Activated T-helper 2 cell treated with anti-CD3 and anti-CD28 coated beads, Interferon-gamma antibody, Interleukin-2, Interleukin-4, amounts not matched to agents 10 μg/mL and 5 μg/mL and 100 μg/mL, durations not matched to agents 14 hours and 24 hours and 36 hours (primary cell): ENCODE measurements at regions of chr5 and their contacts with region 1.

Region 1: DNA sequence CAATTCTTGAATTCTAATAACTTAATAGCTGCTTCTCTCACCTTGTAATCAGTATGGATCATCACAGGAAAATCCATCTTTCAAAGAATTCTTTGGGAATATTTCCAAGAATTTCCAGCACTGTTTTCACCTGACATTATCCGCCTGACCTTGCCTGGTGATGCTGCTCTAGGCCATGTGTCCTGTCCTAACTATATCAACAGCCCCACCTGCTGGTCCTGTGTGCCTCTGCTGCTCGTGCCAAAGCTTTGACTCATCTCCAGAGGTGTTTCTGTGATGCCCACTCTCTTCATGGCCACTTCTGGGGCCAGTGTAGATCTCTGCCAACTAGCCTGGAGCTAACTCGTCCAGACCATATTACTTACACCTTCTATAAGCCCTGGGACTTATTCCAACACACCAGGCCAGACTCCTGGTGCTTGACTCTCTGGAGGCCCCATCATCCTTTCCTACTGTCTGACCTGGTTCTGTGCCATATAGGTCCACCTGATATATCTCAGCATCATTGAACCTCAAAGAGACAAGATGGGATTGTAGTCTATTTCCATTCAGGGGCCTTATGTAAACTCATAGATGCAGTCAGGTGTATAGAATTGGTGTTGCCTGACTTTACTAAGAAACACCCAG is 67.5 kb upstream of the CKMT2 start:
- DNase-seq: peak; percentile 49
- H3K4me3 Mint-ChIP-seq: no peak overlapping the region
- H3K27ac Mint-ChIP-seq: peak overlapping the region; percentile 38
- H3K4me1 Mint-ChIP-seq: peaks cover 28% of the 10 kb centered on the region
- H3K27me3 Mint-ChIP-seq: no peaks in the 10 kb centered on the region

Region 2: DNA sequence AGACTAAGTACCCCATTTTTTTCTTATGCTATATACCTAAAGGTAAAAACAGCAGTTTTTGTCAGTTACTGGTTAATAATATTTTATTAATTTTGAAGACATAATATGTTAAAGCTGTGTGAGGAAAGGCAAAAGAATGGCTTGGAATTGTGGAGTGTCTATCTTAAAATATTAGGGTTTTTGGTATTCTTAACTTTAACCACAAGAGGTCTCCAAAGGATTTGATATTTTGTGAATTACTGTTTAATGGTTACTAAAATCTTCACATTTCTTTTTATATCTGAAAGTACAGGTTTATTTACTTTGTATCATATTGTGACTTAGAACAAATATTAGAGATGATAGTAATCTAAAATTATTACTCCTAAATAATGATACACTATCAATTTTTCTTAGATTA is 478.8 kb before region 1 on chr5:
- intact Hi-C with region 1: loop called (anchors 2 kb)
- DNase-seq: no peak
- H3K4me3 Mint-ChIP-seq: no peak overlapping the region
- H3K27ac Mint-ChIP-seq: no peak overlapping the region
- H3K4me1 Mint-ChIP-seq: peaks cover 27% of the 10 kb centered on the region
- H3K27me3 Mint-ChIP-seq: no peaks in the 10 kb centered on the region